ENCODE measurements at regions of chr13 and their contacts with region 1.

Region 1: GRCh38 chr13:91381371-91381770 is 17.1 kb upstream of the GPC5 start:
- DNase-seq: no peak
- H3K4me3 Mint-ChIP-seq: no peak overlapping the region
- H3K27ac Mint-ChIP-seq: no peak overlapping the region
- H3K4me1 Mint-ChIP-seq: no peaks in the 10 kb centered on the region
- H3K27me3 Mint-ChIP-seq: no peaks in the 10 kb centered on the region
- CTCF ChIP-seq: no peak

Region 2: GRCh38 chr13:91722267-91722884 is 341.0 kb after region 1 on chr13:
- CTCF ChIA-PET with region 1: no interaction called
- intact Hi-C with region 1: loop called (anchors 5 kb)
- DNase-seq: no peak
- H3K4me3 Mint-ChIP-seq: no peak overlapping the region
- H3K27ac Mint-ChIP-seq: no peak overlapping the region
- H3K4me1 Mint-ChIP-seq: no peaks in the 10 kb centered on the region
- H3K27me3 Mint-ChIP-seq: no peaks in the 10 kb centered on the region
- CTCF ChIP-seq: no peak